Right ventricle myocardium inferior (tissue), 1 donor: ENCODE measurements at regions of chrX and their contacts with region 1.

Region 1: DNA sequence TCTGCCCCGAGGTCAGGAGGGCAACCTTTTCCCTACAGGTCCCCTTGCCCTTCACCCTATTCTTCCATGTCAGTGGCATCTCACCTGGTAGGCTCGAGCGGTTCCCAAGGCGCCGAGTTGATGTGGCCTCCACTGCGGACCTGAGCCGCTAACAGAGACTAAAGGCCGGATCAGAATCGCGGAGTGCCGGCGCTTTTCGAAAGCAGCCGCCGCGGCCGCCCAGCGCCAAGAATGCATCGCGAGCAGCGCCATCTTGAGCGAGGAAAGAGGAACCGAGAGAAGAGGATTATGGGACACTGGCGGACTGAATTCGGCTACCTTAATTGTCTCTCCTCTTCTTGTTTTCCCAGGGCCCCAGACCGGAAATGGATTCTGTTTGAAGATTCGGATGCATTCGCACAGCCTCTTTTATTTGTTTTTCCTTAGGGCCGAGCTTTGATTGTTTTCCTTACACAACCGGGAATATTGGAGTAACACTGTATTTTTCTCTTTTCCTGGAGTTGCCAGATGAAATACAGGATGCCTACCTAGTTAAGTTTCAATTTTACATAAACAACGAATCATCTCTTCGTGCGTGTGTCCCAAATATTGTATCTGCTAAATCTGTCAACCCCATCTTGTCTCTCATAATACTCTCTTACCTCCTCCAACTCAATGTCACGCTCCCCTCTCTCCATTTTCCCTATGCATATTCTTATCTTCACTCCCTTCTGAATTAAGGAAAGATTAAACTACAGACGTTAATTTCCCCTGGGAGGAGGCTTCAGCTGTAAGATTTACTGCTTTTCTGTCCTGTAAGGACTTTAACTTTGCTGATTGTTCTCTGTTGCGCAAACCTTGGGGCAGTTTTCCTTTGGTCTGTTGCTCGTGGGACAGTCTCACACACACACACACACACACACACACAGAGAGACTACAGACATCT is at the start of gene ABCB7:
- DNase-seq: peak; percentile 63
- ATAC-seq: peak; percentile 92
- total RNA-seq, gene ABCB7: 37.7 TPM

Region 2: DNA sequence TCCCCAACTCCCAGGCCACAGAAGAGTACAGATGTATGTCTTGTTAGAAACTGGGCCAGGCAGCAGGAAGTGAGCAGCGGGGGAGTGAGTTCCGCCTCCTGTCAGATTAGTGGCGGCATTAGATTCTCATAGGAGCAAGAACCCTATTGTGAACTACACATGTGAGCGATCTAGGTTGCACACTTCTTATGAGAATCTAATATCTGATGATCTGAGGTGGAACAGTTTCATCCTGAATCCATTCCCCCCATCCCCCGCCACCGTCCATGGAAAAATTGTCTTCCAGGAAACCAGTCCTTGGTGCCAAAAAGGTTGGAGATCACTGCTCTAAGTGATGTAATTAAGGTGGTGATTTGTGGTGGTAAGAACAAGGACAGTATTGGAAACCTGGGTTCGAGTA is 206.6 kb before region 1 on chrX:
- intact Hi-C with region 1: no loop called
- DNase-seq: no peak
- ATAC-seq: no peak

Region 3: GRCh38 chrX:75107863-75108509 is 48.3 kb before region 1 on chrX:
- intact Hi-C with region 1: loop called (anchors 10 kb)
- DNase-seq: no peak
- ATAC-seq: peak; percentile 37

Region 4: DNA sequence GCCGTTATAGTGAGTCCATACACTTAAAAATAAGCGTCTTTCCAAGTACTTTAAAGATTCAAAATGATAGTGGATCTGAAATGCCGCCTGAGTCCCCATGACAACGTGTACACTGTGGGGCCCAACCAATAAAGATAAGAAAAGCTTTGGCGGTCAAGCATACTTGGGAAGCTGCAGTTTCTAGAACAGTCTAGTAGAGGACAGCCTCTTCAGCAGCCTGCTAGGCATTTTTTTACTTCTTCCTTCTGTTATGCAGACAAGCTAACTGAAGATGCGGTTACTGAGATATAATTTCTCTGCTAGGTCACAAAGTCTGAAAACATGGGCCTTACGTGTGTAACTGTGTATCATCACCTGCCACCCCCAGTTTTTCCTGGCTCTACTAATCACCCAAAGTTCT is 117.2 kb after region 1 on chrX:
- intact Hi-C with region 1: loop called (anchors 2 kb)
- DNase-seq: no peak
- ATAC-seq: peak; percentile 38

Region 5: GRCh38 chrX:75291611-75292010 is 135.3 kb after region 1 on chrX:
- intact Hi-C with region 1: no loop called
- DNase-seq: no peak
- ATAC-seq: no peak

Region 6: DNA sequence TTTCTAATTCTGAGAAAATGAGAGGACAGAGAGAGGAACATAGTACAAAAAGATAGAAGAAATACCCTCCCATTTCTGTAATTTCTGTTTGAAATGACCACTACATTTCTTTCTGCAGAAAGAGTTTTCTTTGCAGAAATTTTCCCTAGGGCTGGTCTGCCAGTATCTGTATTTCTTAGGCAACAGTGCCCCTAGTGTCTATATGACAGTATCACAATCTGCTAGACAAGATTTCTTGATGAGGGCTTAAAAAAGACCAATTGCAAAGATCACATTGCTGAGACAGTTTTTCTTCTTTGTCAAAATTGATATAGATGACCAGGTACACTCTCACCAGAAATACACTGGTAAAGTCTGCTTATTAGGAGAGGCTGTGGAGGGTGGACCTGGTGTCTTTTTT is 447.6 kb after region 1 on chrX:
- intact Hi-C with region 1: loop called (anchors 10 kb)
- DNase-seq: no peak
- ATAC-seq: no peak